ENCODE measurements at regions of chr1 and their contacts with region 1.

Region 1: GRCh38 chr1:55277377-55278130 is 62.4 kb upstream of the USP24 start:
- DNase-seq: peak; percentile 71 to 95 (median 88)

Region 2: GRCh38 chr1:55140546-55140983 is 137.0 kb before region 1 on chr1:
- intact Hi-C with region 1: loop called (anchors 5 kb)
- DNase-seq: peak in 40 of 42 donors; percentile 20 to 93 (median 73)

Region 3: GRCh38 chr1:55172272-55172671 is 105.3 kb before region 1 on chr1:
- intact Hi-C with region 1: no loop called
- DNase-seq: no peak

Region 4: GRCh38 chr1:55542901-55543504 is 265.4 kb after region 1 on chr1:
- intact Hi-C with region 1: no loop called
- DNase-seq: no peak

Measured in head of caudate nucleus (tissue), 42 donors.